ENCODE measurements at regions of chr16 and their contacts with region 1.

Region 1: DNA sequence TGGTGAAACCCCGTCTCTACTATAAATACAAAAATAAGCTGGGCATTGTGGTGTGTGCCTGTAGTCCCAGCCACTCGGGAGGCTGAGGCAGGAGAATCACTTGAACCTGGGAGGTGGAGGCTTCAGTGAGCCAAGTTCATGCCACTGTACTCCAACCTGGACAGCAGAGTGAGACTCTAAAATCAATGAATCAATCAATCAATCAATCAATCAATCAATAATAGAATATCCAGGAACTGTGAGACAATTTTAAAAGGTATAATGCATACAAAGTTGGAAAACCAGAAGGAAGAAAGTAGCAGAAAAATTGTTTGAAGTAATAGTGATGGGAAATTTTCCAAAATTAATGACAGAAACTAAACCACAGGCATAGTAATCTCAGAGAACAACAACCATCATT is 633.7 kb downstream of the HS3ST4 start:
- DNase-seq: no peak
- H3K4me3 ChIP-seq: no peak overlapping the region
- H3K27ac ChIP-seq: no peak overlapping the region
- H3K4me1 ChIP-seq: no peaks in the 10 kb centered on the region
- H3K27me3 ChIP-seq: no peaks in the 10 kb centered on the region
- CTCF ChIP-seq: no peak
- EP300 ChIP-seq: no peak
- POLR2A ChIP-seq: no peak

Region 2: DNA sequence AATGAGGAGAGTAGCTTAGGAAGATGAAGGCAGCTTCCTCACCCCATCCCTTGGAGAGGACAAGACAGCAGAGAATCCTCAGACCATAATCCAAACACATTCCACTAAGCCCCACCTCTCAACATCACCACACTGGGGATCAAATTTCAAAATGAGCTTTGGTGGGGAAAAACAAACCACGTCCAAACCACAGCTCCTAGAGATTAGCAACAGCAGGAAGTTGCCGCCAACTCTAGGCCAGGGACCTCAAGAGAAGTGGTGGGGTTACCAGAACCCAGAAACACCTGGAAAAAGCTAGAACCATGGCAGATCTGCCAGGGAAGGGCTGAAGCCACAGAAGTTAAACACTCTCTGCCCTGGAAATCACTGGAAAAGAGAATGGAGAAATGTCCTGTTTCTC is 62.0 kb before region 1 on chr16:
- intact Hi-C with region 1: loop called (anchors 10 kb)
- DNase-seq: no peak
- H3K4me3 ChIP-seq: no peak overlapping the region
- H3K27ac ChIP-seq: no peak overlapping the region
- H3K4me1 ChIP-seq: no peaks in the 10 kb centered on the region
- H3K27me3 ChIP-seq: no peaks in the 10 kb centered on the region
- CTCF ChIP-seq: no peak
- EP300 ChIP-seq: no peak
- POLR2A ChIP-seq: no peak

Measured in sigmoid colon (tissue), 7 donors.